Posterior vena cava (tissue), 2 donors: ENCODE measurements at regions of chr19 and their contacts with region 1.

Region 1: GRCh38 chr19:35140962-35141637 is 2.0 kb upstream of the FXYD7 start:
- DNase-seq: peak; percentile 98

Region 2: DNA sequence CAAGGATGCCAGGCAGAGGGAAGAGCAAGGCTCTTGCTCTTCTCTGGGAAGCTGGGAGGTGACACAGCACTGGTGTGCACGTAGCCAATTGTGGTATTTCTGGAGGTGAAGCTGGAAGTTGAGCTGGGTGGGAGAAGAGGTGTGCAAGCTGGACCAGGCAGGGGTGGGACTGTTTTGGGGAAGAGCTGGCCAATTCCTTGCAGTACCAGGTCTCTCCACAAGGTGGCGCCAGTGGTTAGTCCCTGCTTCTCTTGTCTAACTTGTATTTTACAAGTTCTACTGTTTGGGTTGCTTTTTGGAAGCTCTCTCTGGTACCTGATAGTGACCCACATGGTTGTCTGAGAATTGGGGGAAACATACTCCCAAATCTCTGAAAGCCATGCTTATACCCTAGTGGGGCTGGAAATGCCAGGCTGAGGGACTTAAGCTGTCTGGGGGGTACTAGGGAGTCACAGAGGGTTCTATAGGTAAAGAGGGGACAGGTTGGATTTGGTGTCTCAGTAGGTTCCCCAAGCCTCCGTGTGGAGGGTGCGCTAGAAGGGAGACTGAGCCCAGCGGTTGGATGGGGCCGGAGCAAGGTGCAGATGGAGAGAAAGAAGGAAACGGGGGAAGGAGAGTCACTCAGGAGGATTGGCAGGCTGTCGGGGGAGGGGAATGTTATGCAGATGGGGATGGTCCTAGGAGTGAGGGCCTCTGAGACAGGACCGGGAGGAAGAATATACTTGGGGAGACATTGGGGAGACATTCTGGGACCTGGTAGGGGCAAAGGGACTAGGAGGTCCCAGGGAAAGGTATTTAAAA is 96.6 kb before region 1 on chr19:
- intact Hi-C with region 1: no loop called
- DNase-seq: peak; percentile 89

Region 3: DNA sequence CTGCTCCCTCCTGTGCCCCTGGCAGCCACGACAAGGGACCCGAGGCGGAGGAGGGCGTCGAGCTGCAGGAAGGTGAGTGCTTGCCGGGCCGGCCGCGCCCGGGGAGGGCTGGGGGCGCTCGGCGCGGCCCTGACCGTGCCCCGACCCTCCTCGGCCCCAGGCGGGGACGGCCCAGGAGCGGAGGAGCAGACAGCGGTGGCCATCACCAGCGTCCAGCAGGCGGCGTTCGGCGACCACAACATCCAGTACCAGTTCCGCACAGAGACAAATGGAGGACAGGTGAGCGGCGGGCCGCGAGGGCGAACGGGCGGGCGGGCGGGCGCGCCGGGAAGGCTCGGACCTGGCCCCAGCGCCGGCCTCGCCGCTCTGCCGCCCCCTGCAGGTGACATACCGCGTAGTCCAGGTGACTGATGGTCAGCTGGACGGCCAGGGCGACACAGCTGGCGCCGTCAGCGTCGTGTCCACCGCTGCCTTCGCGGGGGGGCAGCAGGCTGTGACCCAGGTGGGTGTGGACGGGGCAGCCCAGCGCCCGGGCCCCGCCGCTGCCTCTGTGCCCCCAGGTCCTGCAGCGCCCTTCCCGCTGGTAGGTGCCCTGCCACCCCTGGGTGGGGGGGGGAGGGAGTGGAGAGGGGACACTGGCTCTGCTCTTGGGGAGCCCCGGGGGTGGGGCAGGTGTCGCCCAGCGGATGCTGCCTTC is 128.5 kb after region 1 on chr19:
- intact Hi-C with region 1: loop called in 1 of 2 experiments (anchors 10 kb)
- DNase-seq: peak; percentile 96